ENCODE measurements at regions of chr13 and their contacts with region 1.

Region 1: GRCh38 chr13:22128441-22129408 is 457.9 kb downstream of the FGF9 start:
- DNase-seq: no peak
- ATAC-seq: no peak
- H3K4me3 ChIP-seq: no peak overlapping the region
- H3K4me3 Mint-ChIP-seq: no peak overlapping the region
- H3K27ac ChIP-seq: no peak overlapping the region
- H3K27ac Mint-ChIP-seq: no peak overlapping the region
- H3K4me1 ChIP-seq: peaks cover 0 to 3% of the 10 kb centered on the region in 2 experiments
- H3K4me1 Mint-ChIP-seq: peaks cover 14 to 26% (median 18%) of the 10 kb centered on the region in 3 donors
- H3K27me3 ChIP-seq: no peaks in the 10 kb centered on the region
- H3K27me3 Mint-ChIP-seq: no peaks in the 10 kb centered on the region

Region 2: DNA sequence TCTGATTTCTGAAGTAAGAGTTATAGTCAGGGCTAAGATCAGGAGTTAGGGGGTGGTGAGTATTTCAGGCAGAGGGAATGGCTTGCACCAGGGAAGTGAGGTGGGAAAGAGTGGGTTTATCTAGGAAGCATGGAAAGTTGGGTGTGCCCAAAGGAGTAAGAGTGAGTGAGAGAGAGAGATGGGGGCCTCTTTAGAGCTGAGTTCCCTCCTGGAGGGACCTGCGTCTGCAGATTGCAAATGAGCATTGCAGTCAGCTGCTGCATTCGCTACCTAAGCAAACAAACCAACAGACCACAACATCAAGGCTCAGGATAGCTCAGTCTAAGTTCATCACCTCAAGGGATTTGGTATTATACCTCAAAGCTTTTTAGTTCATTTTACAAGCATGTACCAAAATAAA is 52.1 kb before region 1 on chr13:
- CTCF ChIA-PET with region 1: no interaction called
- POLR2A ChIA-PET with region 1: no interaction called
- DNase-seq: peak in 5 of 35 experiments; percentile 6 to 34 (median 12)
- ATAC-seq: peak; percentile 43 to 94 (median 71)
- H3K4me3 ChIP-seq: no peak overlapping the region
- H3K4me3 Mint-ChIP-seq: no peak overlapping the region
- H3K27ac ChIP-seq: no peak overlapping the region
- H3K27ac Mint-ChIP-seq: peak overlapping the region; percentile 76 to 78
- H3K4me1 ChIP-seq: peaks cover 0 to 2% of the 10 kb centered on the region in 2 experiments
- H3K4me1 Mint-ChIP-seq: peaks cover 36 to 44% (median 36%) of the 10 kb centered on the region in 3 donors
- H3K27me3 ChIP-seq: no peaks in the 10 kb centered on the region
- H3K27me3 Mint-ChIP-seq: no peaks in the 10 kb centered on the region

Region 3: DNA sequence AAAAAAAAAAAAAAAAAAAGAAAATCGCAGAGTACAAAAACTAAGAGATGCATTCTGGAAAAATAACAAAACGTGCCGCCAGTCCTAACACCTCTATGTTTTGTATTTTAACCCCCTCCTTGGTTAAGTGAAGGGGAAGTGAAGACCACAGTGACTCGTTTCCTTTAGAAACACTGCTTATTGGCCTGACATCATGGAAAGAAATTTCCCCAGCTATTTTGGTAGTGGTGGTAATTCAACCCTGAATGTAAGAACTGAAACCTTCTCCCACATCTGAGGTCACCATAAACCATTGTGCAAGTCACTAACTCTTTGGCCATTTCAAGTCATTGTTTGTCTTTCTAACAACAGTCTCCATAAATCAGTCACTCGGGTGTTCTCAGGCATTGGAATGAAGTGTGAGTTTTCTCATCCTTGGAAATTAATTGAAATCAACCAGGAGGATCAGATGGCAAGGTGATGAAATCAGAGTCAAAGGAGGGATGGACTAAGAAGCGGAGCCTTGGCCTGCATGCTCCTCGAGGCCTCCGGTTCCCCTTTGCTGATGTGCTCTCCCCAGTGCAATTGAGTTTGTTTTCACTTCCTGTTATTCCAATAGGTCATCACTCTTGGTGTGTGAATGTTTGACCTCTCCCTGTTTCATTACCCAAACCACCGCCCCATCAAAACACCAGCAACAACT is 14.0 kb before region 1 on chr13:
- CTCF ChIA-PET with region 1: interaction called in 1 of 2 experiments, 4 read pairs
- POLR2A ChIA-PET with region 1: interaction called in 1 of 2 experiments, 13 read pairs
- DNase-seq: peak in 27 of 35 experiments; percentile 0 to 87 (median 25)
- ATAC-seq: peak; percentile 64 to 96 (median 80)
- H3K4me3 ChIP-seq: no peak overlapping the region
- H3K4me3 Mint-ChIP-seq: peak overlapping the region in 2 of 3 donors; percentile 1 to 13
- H3K27ac ChIP-seq: peak overlapping the region; percentile 58
- H3K27ac Mint-ChIP-seq: peak overlapping the region; percentile 84
- H3K4me1 ChIP-seq: peaks cover 0 to 12% of the 10 kb centered on the region in 2 experiments
- H3K4me1 Mint-ChIP-seq: peaks cover 28 to 48% (median 35%) of the 10 kb centered on the region in 3 donors
- H3K27me3 ChIP-seq: no peaks in the 10 kb centered on the region
- H3K27me3 Mint-ChIP-seq: no peaks in the 10 kb centered on the region